Right lobe of liver (tissue), 6 donors: ENCODE measurements at regions of chr14 and their contacts with region 1.

Region 1: GRCh38 chr14:77314043-77314442 is 6.6 kb downstream of the POMT2 start:
- DNase-seq: no peak
- ATAC-seq: no peak
- H3K4me3 ChIP-seq: no peak overlapping the region
- H3K27ac ChIP-seq: no peak overlapping the region
- H3K4me1 ChIP-seq: peaks cover 0 to 29% (median 0%) of the 10 kb centered on the region in 4 donors
- H3K27me3 ChIP-seq: no peaks in the 10 kb centered on the region
- CTCF ChIP-seq: no peak
- POLR2A ChIP-seq: no peak

Region 2: GRCh38 chr14:76876076-76876475 is 438.0 kb before region 1 on chr14:
- intact Hi-C with region 1: loop called in 1 of 2 experiments (anchors 10 kb)
- DNase-seq: peak in 2 of 3 donors; percentile 53 to 66
- ATAC-seq: peak; percentile 93 to 98 (median 94)
- H3K4me3 ChIP-seq: no peak overlapping the region
- H3K27ac ChIP-seq: no peak overlapping the region
- H3K4me1 ChIP-seq: no peaks in the 10 kb centered on the region
- H3K27me3 ChIP-seq: no peaks in the 10 kb centered on the region
- CTCF ChIP-seq: peak; percentile 94 to 96 (median 95)
- POLR2A ChIP-seq: no peak

Region 3: GRCh38 chr14:77421201-77421600 is 107.2 kb after region 1 on chr14:
- intact Hi-C with region 1: no loop called
- DNase-seq: no peak
- ATAC-seq: no peak
- H3K4me3 ChIP-seq: no peak overlapping the region
- H3K27ac ChIP-seq: no peak overlapping the region
- H3K4me1 ChIP-seq: no peaks in the 10 kb centered on the region
- H3K27me3 ChIP-seq: no peaks in the 10 kb centered on the region
- CTCF ChIP-seq: no peak
- POLR2A ChIP-seq: no peak